Activated CD4-positive, alpha-beta T cell treated with anti-CD3 and anti-CD28 coated beads for 36 hours (primary cell): ENCODE measurements at regions of chr7 and their contacts with region 1.

Region 1: GRCh38 chr7:12686894-12687717 is at the start of gene ARL4A:
- DNase-seq: peak; percentile 95
- ATAC-seq: peak; percentile 76
- H3K4me3 Mint-ChIP-seq: peak within 1 kb of the TSS; percentile 78
- H3K27ac Mint-ChIP-seq: peak within 1 kb of the TSS; percentile 93
- H3K4me1 Mint-ChIP-seq: peaks cover 30% of the 10 kb centered on the region
- H3K27me3 Mint-ChIP-seq: no peaks in the 10 kb centered on the region
- total RNA-seq, gene ARL4A: 7.5 to 10.4 TPM

Region 2: GRCh38 chr7:12211054-12211710 is 475.9 kb before region 1 on chr7 and contains the start of gene TMEM106B:
- CTCF ChIA-PET with region 1: no interaction called
- POLR2A ChIA-PET with region 1: no interaction called
- intact Hi-C with region 1: loop called (anchors 1 kb)
- DNase-seq: peak; percentile 99
- ATAC-seq: peak; percentile 92
- H3K4me3 Mint-ChIP-seq: peak within 1 kb of the TSS; percentile 98
- H3K27ac Mint-ChIP-seq: peak within 1 kb of the TSS; percentile 100
- H3K4me1 Mint-ChIP-seq: peaks cover 27% of the 10 kb centered on the region
- H3K27me3 Mint-ChIP-seq: no peaks in the 10 kb centered on the region
- total RNA-seq, gene TMEM106B: 21.6 to 25.3 TPM

Region 3: GRCh38 chr7:12524794-12525386 is 162.2 kb before region 1 on chr7:
- CTCF ChIA-PET with region 1: interaction called, 11 read pairs
- POLR2A ChIA-PET with region 1: no interaction called
- intact Hi-C with region 1: no loop called
- DNase-seq: no peak
- ATAC-seq: no peak
- H3K4me3 Mint-ChIP-seq: no peak overlapping the region
- H3K27ac Mint-ChIP-seq: no peak overlapping the region
- H3K4me1 Mint-ChIP-seq: no peaks in the 10 kb centered on the region
- H3K27me3 Mint-ChIP-seq: peaks cover 8% of the 10 kb centered on the region

Region 4: GRCh38 chr7:12674849-12675248 is 12.3 kb before region 1 on chr7:
- CTCF ChIA-PET with region 1: interaction called, 13 read pairs
- POLR2A ChIA-PET with region 1: no interaction called
- intact Hi-C with region 1: no loop called
- DNase-seq: peak; percentile 49
- ATAC-seq: peak; percentile 73
- H3K4me3 Mint-ChIP-seq: no peak overlapping the region
- H3K27ac Mint-ChIP-seq: no peak overlapping the region
- H3K4me1 Mint-ChIP-seq: peaks cover 3% of the 10 kb centered on the region
- H3K27me3 Mint-ChIP-seq: no peaks in the 10 kb centered on the region

Region 5: GRCh38 chr7:13057462-13058200 is 370.5 kb after region 1 on chr7:
- CTCF ChIA-PET with region 1: no interaction called
- POLR2A ChIA-PET with region 1: no interaction called
- intact Hi-C with region 1: loop called in 1 of 2 experiments (anchors 10 kb)
- DNase-seq: no peak
- ATAC-seq: no peak
- H3K4me3 Mint-ChIP-seq: peak overlapping the region; percentile 13
- H3K27ac Mint-ChIP-seq: peak overlapping the region; percentile 24
- H3K4me1 Mint-ChIP-seq: peaks cover 12% of the 10 kb centered on the region
- H3K27me3 Mint-ChIP-seq: no peaks in the 10 kb centered on the region

Region 6: DNA sequence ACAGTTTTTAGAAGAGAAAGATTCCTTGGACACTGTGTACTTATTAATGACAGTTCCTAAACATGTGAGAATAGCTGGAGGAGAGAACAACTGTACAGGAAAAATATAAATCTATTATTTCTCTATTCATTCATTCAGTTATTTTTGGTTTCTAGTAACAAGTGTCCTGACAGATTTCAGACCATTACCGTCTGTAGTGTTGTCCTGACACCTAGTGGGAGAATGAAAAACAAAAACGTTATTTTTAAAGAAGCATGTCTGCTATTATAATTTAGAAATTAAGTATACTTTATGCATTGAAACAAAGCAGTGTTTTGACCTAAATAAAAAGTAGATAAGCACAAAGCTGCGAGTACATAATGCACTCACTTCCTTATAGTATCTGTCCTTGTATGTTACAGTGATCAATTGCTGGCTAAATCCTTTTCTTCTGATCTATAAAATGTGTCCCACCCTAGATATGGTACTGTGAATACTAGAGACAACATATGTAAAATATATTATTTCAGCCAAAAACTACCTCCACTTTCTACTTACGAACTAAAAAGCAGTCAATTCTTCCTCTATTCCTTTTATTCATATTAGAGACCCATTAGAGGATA is 575.9 kb after region 1 on chr7:
- CTCF ChIA-PET with region 1: no interaction called
- POLR2A ChIA-PET with region 1: no interaction called
- intact Hi-C with region 1: loop called (anchors 2 kb)
- DNase-seq: no peak
- ATAC-seq: no peak
- H3K4me3 Mint-ChIP-seq: no peak overlapping the region
- H3K27ac Mint-ChIP-seq: no peak overlapping the region
- H3K4me1 Mint-ChIP-seq: no peaks in the 10 kb centered on the region
- H3K27me3 Mint-ChIP-seq: peaks cover 7% of the 10 kb centered on the region